Caco-2 (cell line): ENCODE measurements at regions of chr5 and their contacts with region 1.

Region 1: GRCh38 chr5:90932052-90932699 is 373.6 kb downstream of the ADGRV1 start:
- DNase-seq: peak; percentile 54 to 72
- H3K4me3 ChIP-seq: no peak overlapping the region
- H3K4me3 Mint-ChIP-seq: no peak overlapping the region
- H3K27ac Mint-ChIP-seq: no peak overlapping the region
- H3K4me1 ChIP-seq: peaks cover 32% of the 10 kb centered on the region
- H3K4me1 Mint-ChIP-seq: peaks cover 28% of the 10 kb centered on the region
- H3K27me3 ChIP-seq: no peaks in the 10 kb centered on the region
- H3K27me3 Mint-ChIP-seq: no peaks in the 10 kb centered on the region
- CTCF ChIP-seq: peak; percentile 80 to 83

Region 2: DNA sequence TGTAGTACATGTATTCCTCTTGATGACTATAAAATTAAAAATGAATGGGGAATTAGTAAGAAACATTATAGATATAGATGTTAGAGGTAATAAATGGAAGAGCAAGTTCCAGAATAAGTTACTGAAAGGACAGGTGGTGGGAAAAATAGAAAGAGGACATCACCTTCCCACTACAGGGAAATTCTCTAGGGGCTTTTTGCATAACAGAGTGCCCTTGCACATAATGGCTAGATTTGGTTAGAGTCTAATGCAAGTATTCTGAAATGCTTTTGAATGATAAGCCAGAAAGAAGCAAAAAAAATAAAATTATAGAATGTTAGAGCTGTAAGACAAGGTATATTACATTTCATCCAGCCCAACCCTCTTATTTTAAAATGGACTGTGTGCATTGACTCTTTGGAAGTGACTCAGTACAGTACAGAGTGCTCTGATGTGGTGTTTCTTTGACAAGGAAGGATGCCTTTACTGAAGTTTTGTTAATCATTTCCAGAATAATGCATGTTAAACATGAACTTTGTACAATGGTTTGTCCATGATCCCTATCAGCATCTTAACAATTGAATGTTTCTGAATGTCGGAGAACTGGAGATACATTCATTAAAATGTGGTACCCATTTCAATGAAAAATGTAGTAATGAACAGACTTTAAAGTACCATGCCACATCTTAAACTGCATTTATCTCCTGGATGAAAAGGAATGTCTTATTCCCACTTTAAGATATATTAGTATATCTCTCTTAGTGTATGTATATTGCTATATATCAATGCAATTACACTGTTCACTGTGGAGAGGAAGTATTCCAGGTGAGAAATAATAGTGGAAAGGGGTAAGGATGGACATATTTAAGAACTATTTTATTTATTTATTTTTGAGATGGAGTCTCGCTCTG is 17.5 kb after region 1 on chr5:
- CTCF ChIA-PET with region 1: no interaction called
- POLR2A ChIA-PET with region 1: no interaction called
- intact Hi-C with region 1: loop called (anchors 2 kb)
- DNase-seq: peak in 1 of 2 experiments; percentile 56
- H3K4me3 ChIP-seq: no peak overlapping the region
- H3K4me3 Mint-ChIP-seq: no peak overlapping the region
- H3K27ac Mint-ChIP-seq: peak overlapping the region; percentile 42
- H3K4me1 ChIP-seq: peaks cover 42% of the 10 kb centered on the region
- H3K4me1 Mint-ChIP-seq: peaks cover 32% of the 10 kb centered on the region
- H3K27me3 ChIP-seq: no peaks in the 10 kb centered on the region
- H3K27me3 Mint-ChIP-seq: no peaks in the 10 kb centered on the region
- CTCF ChIP-seq: no peak

Region 3: DNA sequence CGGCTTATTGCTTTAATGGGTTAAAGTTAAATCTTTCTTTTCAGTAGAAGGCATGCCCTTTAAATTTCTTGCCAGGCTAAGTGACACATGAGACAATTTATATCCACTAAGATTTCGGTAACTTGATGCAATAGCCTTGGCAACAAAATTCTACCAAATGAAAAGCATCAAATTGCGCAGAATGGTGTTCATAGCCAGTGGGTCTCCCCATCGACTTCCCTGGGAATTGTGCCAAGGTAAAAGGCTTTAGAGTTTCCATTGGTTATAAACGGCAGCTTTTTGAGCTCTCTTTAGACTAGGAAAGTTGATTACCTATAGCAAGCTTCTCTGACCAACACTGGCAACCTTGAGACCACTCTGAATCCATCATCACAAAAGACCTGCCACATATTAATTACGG is 92.6 kb after region 1 on chr5:
- CTCF ChIA-PET with region 1: no interaction called
- POLR2A ChIA-PET with region 1: no interaction called
- intact Hi-C with region 1: loop called (anchors 1 kb)
- DNase-seq: no peak
- H3K4me3 ChIP-seq: no peak overlapping the region
- H3K4me3 Mint-ChIP-seq: no peak overlapping the region
- H3K27ac Mint-ChIP-seq: no peak overlapping the region
- H3K4me1 ChIP-seq: peaks cover 13% of the 10 kb centered on the region
- H3K4me1 Mint-ChIP-seq: peaks cover 16% of the 10 kb centered on the region
- H3K27me3 ChIP-seq: no peaks in the 10 kb centered on the region
- H3K27me3 Mint-ChIP-seq: no peaks in the 10 kb centered on the region
- CTCF ChIP-seq: no peak

Region 4: DNA sequence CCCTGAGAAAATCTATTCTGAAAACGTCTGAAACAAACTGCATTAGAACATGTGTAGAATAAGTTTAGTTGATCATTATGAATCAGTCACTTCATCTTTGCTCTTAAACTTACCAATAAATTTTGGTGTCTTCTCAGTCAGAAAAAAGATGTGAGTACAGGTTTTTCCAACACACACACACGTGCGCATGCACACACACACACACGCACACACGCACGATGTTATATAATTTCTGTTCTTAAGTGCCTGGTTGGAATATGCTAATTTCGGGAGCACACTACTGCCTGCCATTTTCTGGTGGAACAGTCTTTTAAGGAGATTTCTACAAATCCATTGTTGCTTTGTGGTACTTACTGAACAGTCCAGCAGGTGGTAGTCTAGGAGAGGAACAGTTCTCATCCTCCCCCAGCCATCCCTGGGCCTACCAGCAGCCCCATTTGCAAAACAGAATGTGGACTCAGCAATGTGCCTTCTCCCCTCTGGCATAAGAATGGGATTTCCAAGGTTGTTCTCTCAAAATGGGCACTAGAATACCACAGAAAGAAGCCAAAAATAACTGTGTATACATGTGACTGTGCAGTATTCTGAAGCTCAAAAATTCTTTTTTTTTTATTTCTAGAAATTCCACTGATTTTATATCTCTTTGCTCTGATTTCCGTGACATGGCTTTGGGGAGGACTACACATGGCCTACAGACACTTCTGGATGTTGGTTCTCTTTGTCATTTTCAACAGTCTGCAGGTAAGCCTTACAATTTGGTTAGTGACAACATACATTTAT is 169.6 kb after region 1 on chr5:
- CTCF ChIA-PET with region 1: no interaction called
- POLR2A ChIA-PET with region 1: no interaction called
- intact Hi-C with region 1: loop called (anchors 1 kb)
- DNase-seq: peak; percentile 78 to 81
- H3K4me3 ChIP-seq: no peak overlapping the region
- H3K4me3 Mint-ChIP-seq: peak overlapping the region; percentile 40
- H3K27ac Mint-ChIP-seq: no peak overlapping the region
- H3K4me1 ChIP-seq: no peaks in the 10 kb centered on the region
- H3K4me1 Mint-ChIP-seq: peaks cover 11% of the 10 kb centered on the region
- H3K27me3 ChIP-seq: no peaks in the 10 kb centered on the region
- H3K27me3 Mint-ChIP-seq: no peaks in the 10 kb centered on the region
- CTCF ChIP-seq: peak; percentile 81 to 84

Region 5: DNA sequence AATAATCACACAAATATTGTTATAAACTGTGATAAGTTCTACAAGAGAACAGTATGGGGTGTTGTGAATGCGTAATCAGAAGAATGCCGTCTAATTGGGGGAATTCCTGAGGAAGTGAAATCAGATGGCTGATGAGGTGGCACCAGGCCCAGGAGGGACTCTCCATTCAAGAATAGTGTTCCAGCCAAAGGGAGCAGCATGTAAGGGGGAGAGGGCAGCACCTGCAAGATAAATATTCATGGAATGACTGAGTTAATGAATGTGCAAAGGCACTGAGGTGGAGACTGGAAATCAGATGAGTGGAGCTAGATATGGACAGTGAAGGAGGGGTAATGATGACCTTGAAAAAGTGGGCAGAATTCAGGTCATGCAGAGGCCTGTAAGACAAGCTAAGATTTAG is 200.4 kb after region 1 on chr5:
- CTCF ChIA-PET with region 1: no interaction called
- POLR2A ChIA-PET with region 1: no interaction called
- intact Hi-C with region 1: no loop called
- DNase-seq: no peak
- H3K4me3 ChIP-seq: no peak overlapping the region
- H3K4me3 Mint-ChIP-seq: no peak overlapping the region
- H3K27ac Mint-ChIP-seq: no peak overlapping the region
- H3K4me1 ChIP-seq: peaks cover 9% of the 10 kb centered on the region
- H3K4me1 Mint-ChIP-seq: peaks cover 7% of the 10 kb centered on the region
- H3K27me3 ChIP-seq: no peaks in the 10 kb centered on the region
- H3K27me3 Mint-ChIP-seq: no peaks in the 10 kb centered on the region
- CTCF ChIP-seq: no peak

Region 6: DNA sequence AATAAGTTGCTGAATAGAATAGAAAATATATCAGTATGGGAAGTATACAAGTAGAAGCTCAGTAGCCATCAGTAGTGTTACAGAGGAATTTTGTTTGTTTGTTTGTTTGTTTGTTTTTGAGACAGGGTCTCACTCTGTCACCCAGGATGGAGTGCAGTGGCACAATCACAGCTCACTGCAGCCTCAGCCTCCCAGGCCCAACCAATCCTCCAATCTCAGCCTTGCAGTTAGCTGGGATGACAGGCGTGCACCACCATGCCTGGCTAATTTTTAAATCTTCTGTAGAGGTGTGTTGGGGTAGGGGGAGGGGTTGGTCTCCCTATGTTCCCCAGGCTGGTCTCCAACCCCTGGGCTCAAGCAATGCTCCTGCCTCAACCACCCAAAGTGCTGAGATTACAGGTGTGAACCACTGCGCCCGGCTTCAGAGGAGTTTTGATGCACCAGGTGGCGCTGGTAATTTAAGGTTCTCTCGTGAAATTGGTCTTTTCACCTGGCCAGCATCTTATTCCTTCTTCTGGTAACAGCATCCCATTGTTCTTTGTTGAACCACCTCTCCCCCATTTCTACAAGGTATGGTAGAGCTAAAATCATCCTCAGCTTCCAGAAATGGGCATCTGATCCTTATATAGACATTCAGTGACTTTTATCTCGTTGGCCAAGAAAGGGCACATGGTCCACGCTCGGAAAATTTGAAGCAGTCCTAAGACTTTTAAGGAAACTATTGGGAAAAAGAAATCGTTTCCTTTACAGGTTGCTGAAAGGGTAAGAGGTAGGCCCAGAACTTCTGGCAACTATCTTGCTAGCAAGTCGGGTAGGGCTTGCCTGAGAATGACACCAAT is 293.9 kb after region 1 on chr5:
- CTCF ChIA-PET with region 1: no interaction called
- POLR2A ChIA-PET with region 1: no interaction called
- intact Hi-C with region 1: loop called (anchors 1 kb)
- DNase-seq: peak; percentile 61 to 72
- H3K4me3 ChIP-seq: no peak overlapping the region
- H3K4me3 Mint-ChIP-seq: no peak overlapping the region
- H3K27ac Mint-ChIP-seq: no peak overlapping the region
- H3K4me1 ChIP-seq: peaks cover 10% of the 10 kb centered on the region
- H3K4me1 Mint-ChIP-seq: peaks cover 9% of the 10 kb centered on the region
- H3K27me3 ChIP-seq: no peaks in the 10 kb centered on the region
- H3K27me3 Mint-ChIP-seq: no peaks in the 10 kb centered on the region
- CTCF ChIP-seq: peak; percentile 56 to 64

Region 7: DNA sequence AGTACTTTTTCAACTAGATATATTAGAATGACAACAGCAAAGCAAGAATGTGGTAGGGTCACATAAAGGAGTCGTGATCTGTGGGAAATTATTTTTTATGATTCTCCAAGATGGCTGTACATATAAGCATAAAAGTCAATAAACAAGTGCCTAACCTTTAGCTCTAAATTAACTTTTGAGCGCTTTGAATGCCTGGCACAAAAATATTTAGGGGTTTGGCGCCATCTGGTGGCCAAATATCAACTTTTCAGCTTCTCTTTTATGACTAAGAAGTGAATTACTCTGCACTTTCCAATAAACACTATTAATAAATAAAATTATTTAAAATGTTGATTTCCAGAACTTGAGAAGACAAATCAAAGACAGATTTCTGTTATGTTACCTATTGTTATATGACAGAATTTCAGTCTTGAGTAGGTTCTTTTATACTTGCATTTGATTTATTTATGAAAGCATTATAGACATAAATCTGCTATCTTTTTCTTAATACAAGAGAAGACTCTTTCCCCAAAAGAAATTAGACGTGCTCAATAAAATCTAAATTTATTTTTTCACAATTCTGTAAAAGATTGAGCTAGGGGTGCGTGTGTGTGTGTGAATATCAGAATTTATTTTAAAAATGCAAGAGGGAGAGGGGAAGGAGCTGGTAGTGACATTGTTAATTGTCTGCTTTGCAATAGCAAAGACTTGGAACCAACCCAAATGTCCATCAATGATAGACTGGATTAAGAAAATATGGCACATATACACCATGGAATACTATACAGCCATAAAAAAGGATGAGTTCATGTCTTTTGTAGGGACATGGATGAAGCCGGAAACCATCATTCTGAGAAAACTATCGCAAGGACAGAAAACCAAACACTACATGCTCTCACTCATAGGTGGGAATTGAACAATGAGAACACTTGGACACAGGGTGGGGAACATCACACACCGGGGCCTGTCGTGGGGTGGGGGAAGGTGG is 487.7 kb after region 1 on chr5:
- CTCF ChIA-PET with region 1: interaction called, 6 read pairs
- POLR2A ChIA-PET with region 1: no interaction called
- intact Hi-C with region 1: loop called (anchors 1 kb)
- DNase-seq: peak; percentile 43 to 54
- H3K4me3 ChIP-seq: no peak overlapping the region
- H3K4me3 Mint-ChIP-seq: no peak overlapping the region
- H3K27ac Mint-ChIP-seq: no peak overlapping the region
- H3K4me1 ChIP-seq: no peaks in the 10 kb centered on the region
- H3K4me1 Mint-ChIP-seq: peaks cover 7% of the 10 kb centered on the region
- H3K27me3 ChIP-seq: no peaks in the 10 kb centered on the region
- H3K27me3 Mint-ChIP-seq: no peaks in the 10 kb centered on the region
- CTCF ChIP-seq: peak; percentile 58 to 76